Activated naive CD4-positive, alpha-beta T cell treated with anti-CD3 and anti-CD28 coated beads for 36 hours (primary cell): ENCODE measurements at regions of chr9 and their contacts with region 1.

Region 1: GRCh38 chr9:126558051-126558665 is 55.6 kb upstream of the LMX1B start:
- DNase-seq: peak; percentile 79
- H3K4me3 Mint-ChIP-seq: no peak overlapping the region
- H3K27ac Mint-ChIP-seq: no peak overlapping the region
- H3K4me1 Mint-ChIP-seq: no peaks in the 10 kb centered on the region
- H3K27me3 Mint-ChIP-seq: peaks cover 28% of the 10 kb centered on the region

Region 2: GRCh38 chr9:126500684-126501382 is 57.3 kb before region 1 on chr9:
- CTCF ChIA-PET with region 1: interaction called, 120 read pairs
- intact Hi-C with region 1: loop called (anchors 1 kb)
- DNase-seq: peak; percentile 78
- H3K4me3 Mint-ChIP-seq: no peak overlapping the region
- H3K27ac Mint-ChIP-seq: no peak overlapping the region
- H3K4me1 Mint-ChIP-seq: peaks cover 10% of the 10 kb centered on the region
- H3K27me3 Mint-ChIP-seq: peaks cover 11% of the 10 kb centered on the region

Region 3: DNA sequence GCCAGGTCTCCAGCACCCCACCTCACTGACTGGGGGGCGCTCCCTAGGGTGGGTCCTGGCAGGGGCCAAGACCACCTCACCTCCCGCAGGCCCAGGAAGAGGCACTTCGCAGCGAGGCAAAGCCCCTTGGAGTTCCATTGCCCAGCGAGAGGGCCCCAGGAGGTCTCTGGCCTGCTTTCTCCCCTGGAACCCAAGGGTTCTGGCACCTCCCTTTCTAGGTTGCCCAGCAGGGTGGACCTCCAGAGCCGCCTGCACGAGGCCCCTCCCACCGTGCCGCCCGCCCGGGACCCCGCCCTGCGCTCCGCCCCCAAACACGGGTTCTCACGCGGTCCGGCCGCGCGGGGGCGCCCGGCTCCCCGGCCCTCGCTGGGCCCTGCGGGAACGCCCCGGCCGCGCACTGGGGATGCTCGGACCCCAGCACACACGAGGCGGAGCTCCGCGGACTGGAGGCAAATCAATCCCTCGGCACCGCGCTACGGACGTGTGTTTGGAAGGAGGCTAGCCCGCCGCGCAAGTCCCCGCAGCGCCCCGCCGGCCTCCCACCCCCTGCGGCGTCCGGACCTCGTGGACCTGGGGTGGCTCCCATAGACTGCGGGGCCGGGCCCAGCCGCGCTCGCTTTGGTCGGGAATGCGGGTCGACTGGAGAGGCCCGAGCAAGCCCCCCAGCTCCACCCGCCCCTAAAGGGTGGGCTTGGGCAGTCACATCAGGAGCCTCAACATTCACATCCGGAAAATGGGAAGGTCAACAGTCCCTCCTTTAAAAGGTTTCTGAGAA is 43.9 kb before region 1 on chr9:
- CTCF ChIA-PET with region 1: interaction called, 13 read pairs
- intact Hi-C with region 1: loop called (anchors 5 kb)
- DNase-seq: peak; percentile 58
- H3K4me3 Mint-ChIP-seq: no peak overlapping the region
- H3K27ac Mint-ChIP-seq: no peak overlapping the region
- H3K4me1 Mint-ChIP-seq: peaks cover 19% of the 10 kb centered on the region
- H3K27me3 Mint-ChIP-seq: peaks cover 62% of the 10 kb centered on the region